GM10248 (cell line): ENCODE measurements at regions of chr14 and their contacts with region 1.

Region 1: DNA sequence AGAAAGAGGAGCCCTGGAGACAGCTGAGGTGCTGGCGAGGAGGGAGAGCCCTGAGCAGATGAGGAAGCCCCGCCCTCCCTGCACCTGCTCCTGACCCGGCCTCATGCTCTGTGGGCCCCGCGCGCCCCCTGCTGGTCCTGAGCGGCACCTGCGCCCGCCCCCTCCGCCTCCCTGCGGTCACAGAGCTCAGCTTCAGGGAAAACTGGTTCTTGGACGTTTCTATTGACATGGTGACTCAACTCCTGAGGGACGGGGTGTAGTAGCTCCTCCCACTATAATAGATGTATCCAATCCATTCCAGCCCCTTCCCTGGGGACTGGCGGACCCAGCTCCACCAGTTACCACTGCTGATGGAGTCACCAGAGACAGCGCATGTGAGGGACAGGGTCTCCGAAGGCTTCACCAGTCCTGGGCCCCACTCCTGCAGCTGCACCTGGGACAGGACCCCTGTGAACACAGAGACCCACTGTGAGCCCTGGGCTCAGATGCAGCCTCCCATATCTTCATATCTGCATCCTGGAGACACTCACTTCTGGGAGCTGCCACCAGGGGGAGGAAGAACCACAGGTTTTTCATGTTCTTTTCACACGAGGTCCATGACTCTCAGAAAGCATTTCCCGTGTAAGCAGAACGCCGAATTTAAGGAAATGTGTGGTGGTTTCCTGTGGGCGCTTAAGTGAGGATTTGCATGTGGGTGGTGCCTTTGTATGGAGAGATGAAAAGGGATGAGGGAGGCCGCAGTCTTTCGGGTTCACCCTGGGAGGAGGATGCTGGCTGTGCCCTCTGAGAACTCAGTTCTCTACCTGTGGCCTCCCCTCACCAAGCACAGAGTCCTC is 1346.4 kb downstream of the TMEM121 start:
- DNase-seq: peak; percentile 66
- CTCF ChIP-seq: peak; percentile 84

Region 2: DNA sequence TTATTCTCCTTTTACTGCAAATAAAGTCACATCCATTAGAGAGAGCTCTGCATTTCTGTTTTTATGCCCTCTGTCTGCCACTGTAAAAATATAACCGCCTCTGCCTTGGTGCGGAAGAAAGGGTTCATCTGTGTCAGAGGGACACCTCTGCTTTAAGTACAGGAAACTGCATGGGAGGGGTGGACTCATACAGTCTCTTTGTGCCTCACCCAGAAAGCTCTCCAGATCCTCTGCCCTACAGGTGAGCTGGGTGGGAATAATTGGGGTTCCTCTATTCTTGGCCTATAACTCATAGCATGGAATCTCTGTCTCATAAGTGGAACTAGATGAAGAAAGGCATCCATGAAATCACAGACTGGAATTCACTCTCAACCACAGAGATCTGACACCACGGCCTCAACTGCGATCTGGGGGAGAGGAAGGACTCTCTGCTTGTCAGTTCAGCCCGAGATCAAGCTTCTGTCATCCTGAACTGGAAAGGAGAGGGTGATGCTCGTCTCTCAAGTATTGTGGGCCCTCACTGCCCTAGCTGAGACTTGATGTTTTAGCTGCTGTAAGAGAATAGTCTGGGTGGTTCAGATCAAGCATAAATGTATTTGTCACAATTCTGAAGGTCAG is 644.2 kb before region 1 on chr14:
- CTCF ChIA-PET with region 1: no interaction called
- POLR2A ChIA-PET with region 1: no interaction called
- DNase-seq: no peak
- CTCF ChIP-seq: no peak

Region 3: GRCh38 chr14:106790189-106791036 is 82.4 kb before region 1 on chr14:
- CTCF ChIA-PET with region 1: interaction called, 48 read pairs
- POLR2A ChIA-PET with region 1: no interaction called
- DNase-seq: peak; percentile 77
- CTCF ChIP-seq: peak; percentile 83

Region 4: DNA sequence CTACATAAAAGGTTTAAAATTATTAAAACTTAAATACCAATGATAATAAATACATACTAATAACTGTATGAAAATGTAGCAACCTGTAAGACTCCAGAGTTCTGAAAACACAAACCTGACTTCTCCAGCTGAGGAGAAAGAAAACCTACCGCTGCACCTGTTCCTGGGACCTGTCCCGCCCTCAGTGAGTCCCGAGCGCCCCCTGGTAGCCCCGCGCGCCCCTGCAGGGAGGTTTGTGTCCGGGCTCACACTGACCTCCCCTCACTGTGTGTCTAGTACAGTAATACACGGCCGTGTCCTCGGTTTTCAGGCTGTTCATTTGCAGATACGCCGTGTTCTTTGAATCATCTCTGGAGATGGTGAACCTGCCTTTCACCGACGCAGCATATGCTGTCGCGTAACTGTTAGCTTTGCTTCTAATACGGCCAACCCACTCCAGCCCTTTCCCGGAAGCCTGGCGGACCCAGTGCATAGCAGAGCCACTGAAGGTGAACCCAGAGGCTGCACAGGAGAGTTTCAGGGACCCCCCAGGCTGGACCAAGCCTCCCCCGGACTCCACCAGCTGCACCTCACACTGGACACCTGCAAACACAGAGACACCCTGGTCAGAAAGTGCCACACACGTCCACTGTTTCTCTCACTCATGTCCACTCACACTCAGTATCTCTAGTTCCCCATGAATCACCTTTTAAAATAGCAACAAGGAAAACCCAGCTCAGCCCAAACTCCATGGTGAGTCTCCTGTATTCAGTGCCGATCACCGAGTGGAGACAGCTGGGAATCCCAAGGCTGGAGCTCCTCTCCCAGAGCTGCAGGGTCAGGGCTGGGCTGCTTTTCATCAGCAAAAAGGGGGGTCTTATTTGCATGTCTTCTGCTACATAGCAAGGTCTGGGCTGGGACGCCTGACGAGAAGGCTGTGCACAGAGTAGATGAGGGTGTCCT is 70.1 kb before region 1 on chr14:
- CTCF ChIA-PET with region 1: interaction called, 21 read pairs
- POLR2A ChIA-PET with region 1: no interaction called
- DNase-seq: peak; percentile 26
- CTCF ChIP-seq: peak; percentile 35

Region 5: GRCh38 chr14:106823552-106823951 is 49.3 kb before region 1 on chr14:
- CTCF ChIA-PET with region 1: interaction called, 227 read pairs
- POLR2A ChIA-PET with region 1: no interaction called
- DNase-seq: no peak
- CTCF ChIP-seq: no peak

Region 6: GRCh38 chr14:106844608-106845285 is 28.1 kb before region 1 on chr14:
- CTCF ChIA-PET with region 1: interaction called, 206 read pairs
- POLR2A ChIA-PET with region 1: interaction called, 5 read pairs
- DNase-seq: peak; percentile 77
- CTCF ChIP-seq: no peak

Region 7: DNA sequence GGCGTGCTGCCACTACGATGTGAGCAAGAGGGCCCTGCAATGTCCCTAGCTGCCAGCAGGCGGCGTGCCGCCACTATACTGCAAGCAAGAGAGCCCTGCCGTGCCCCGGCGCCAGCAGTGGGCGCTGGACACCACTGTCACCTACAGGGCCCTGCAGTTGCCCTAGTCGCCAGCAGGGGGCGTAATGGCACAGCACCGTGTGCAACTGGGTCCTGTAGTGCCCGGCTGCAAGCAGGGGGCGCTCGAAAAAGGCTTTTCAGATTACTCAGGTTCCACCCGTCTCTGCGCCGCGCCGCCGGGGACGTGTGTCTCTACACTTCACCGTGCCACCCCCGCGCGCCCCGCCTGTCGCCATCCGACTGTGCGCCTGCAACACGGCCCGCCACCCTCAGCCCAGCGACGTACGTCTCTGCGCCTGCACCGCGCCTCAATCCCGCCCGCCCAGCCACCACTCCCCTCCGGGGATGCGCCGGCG is 10.4 kb after region 1 on chr14:
- CTCF ChIA-PET with region 1: interaction called, 20 read pairs
- POLR2A ChIA-PET with region 1: no interaction called
- DNase-seq: no peak
- CTCF ChIP-seq: peak; percentile 65